Mammary epithelial cell (primary cell): ENCODE measurements at regions of chr16 and their contacts with region 1.

Region 1: DNA sequence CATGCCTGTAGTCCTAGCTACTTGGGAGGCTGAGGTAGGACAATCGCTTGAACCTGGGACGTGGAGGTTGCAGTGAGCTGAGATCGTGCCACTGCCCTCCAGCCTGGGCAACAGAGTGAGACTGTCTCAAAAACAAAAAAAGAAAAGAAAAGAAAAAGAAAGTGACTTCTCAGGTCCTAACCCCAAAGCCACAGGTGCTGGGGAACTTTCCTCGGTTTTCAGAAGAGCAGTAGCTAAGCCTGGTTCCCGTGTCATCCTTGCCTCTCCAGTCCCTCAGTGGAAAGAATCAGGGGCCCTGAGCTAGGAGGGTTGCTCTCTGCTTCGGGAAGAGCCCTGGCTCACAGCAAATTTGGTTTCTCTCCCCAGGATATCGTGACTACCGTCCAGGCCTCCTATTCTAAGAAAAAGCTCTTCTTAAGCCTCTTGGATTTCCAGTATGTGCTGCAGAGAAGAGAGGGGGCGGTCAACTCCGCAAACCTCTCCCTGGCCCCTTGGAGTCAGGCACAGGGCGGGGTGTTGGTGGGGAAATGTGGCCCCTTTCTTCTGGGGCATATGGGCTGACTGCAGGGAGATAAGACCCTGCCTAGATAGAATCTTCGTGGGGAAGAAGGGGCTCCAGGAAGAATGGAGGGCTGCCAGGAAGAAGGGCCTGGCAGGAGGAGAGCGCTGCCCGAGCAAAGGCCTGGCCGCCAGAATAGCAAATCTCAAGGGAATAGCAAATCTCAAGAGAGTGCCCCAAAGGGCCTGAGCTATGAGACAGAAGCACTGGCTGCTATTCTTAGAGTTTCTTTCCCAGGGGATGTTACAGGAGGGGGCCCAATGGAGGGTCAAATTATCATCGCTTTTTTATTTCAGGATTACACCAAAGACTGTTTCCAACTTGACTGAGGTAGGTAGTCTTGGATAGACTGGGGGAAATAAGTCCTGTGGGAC is 8.3 kb upstream of the NLRC5 start:
- DNase-seq: no peak
- H3K4me3 ChIP-seq: no peak overlapping the region
- H3K27ac ChIP-seq: no peak overlapping the region
- H3K4me1 ChIP-seq: peaks cover 14% of the 10 kb centered on the region
- H3K27me3 ChIP-seq: no peaks in the 10 kb centered on the region
- CTCF ChIP-seq: no peak

Region 2: DNA sequence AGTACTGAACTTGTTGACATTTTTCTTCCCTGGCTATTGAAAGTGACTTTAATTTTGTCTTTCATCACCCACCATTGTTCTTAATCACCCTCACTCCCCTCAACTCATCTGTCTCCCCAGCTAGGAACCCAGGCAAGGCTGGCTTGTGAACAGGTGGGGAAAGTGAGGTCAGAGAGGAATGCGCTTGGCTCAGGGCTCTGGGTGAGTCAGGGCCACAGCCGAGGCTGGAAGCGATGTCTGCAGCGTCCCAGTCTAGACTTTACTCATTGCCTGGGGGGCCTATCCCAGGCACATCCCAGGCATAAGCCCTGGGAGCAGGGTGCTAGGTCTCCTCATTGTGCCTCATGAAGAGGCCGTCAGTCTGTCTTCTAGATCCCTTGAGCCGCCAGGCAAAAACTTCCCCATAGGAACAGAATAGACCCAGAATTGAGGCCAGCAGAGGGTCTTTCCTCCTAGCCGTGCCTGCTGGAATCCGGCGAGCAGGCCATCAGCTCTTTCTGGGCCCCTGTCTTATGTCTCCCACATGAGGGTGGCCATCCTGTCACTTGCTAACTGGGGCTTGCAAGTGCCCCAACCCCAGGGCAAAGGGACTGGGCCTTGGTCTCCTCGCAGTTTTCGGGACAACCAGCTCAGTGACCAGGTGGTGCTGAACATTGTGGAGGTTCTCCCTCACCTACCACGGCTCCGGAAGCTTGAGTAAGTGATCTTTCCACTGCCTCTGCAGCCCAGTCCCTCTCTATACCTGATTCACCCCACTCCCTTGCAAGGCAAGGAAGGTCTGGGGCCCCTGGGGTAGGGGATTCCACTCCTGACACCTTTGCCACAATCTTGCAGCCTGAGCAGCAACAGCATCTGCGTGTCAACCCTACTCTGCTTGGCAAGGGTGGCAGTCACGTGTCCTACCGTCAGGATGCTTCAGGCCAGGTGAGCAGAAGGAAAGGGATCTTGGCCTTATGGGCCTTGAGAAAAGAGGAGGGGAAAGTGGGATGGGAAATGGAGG is 48.4 kb after region 1 on chr16:
- CTCF ChIA-PET with region 1: no interaction called
- dilution Hi-C with region 1: loop called (anchors 5 kb)
- in situ Hi-C with region 1: no loop called
- intact Hi-C with region 1: no loop called
- DNase-seq: peak; percentile 60
- H3K4me3 ChIP-seq: no peak overlapping the region
- H3K27ac ChIP-seq: no peak overlapping the region
- H3K4me1 ChIP-seq: peaks cover 18% of the 10 kb centered on the region
- H3K27me3 ChIP-seq: no peaks in the 10 kb centered on the region
- CTCF ChIP-seq: no peak